WTC11 (cell line): ENCODE measurements at regions of chr9 and their contacts with region 1.

Region 1: GRCh38 chr9:34500623-34501267 is 22.0 kb downstream of the ENHO start:
- DNase-seq: peak; percentile 83
- ATAC-seq: peak; percentile 80
- H3K4me3 Mint-ChIP-seq: no peak overlapping the region
- H3K27ac Mint-ChIP-seq: no peak overlapping the region
- H3K4me1 Mint-ChIP-seq: peaks cover 12% of the 10 kb centered on the region
- H3K27me3 Mint-ChIP-seq: peaks cover 4% of the 10 kb centered on the region; the same call in 1 of the 2 replicates
- CTCF ChIP-seq: peak; percentile 98

Region 2: GRCh38 chr9:34437006-34437925 is 63.5 kb before region 1 on chr9:
- CTCF ChIA-PET with region 1: interaction called, 17 read pairs
- POLR2A ChIA-PET with region 1: no interaction called
- DNase-seq: peak; percentile 71
- ATAC-seq: peak; percentile 97
- H3K4me3 Mint-ChIP-seq: no peak overlapping the region
- H3K27ac Mint-ChIP-seq: no peak overlapping the region
- H3K4me1 Mint-ChIP-seq: peaks cover 13% of the 10 kb centered on the region
- H3K27me3 Mint-ChIP-seq: no peaks in the 10 kb centered on the region
- CTCF ChIP-seq: peak; percentile 74

Region 3: DNA sequence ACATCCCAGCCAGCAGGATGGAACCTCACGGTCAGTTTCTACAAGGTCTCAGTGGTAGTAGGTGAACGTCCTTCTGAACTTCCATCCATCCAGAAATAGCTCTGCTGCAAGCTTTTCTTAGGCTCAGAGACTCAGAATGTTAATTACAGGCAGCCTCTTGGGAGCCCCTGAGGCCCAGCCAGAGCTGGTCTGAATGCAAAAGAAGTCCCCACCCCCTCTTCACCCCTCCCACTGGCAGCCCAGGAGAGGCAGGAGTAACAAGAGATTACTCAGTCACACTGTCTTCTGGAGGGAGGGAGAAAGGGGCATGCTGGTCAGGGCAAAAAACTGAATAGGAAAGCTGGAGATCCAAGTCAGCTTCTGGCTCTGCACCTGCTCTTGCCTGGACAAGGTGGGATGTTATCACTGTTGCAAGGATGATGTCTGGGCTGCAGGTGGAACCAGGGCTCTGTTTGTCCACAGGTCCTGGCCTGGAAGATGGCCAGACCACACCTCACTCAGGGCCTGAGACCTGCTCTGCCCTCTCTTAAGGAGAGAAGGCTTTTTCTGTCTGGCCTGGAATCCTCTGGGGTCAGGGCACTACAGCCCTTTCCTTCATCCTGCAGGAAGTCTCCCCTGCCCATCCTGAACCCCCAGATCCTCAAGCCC is 12.9 kb after region 1 on chr9:
- CTCF ChIA-PET with region 1: interaction called, 18 read pairs
- POLR2A ChIA-PET with region 1: interaction called, 3 read pairs
- DNase-seq: peak; percentile 72
- ATAC-seq: peak; percentile 78
- H3K4me3 Mint-ChIP-seq: peak overlapping the region; percentile 43
- H3K27ac Mint-ChIP-seq: peak overlapping the region; percentile 96
- H3K4me1 Mint-ChIP-seq: peaks cover 59% of the 10 kb centered on the region
- H3K27me3 Mint-ChIP-seq: no peaks in the 10 kb centered on the region
- CTCF ChIP-seq: no peak

Region 4: DNA sequence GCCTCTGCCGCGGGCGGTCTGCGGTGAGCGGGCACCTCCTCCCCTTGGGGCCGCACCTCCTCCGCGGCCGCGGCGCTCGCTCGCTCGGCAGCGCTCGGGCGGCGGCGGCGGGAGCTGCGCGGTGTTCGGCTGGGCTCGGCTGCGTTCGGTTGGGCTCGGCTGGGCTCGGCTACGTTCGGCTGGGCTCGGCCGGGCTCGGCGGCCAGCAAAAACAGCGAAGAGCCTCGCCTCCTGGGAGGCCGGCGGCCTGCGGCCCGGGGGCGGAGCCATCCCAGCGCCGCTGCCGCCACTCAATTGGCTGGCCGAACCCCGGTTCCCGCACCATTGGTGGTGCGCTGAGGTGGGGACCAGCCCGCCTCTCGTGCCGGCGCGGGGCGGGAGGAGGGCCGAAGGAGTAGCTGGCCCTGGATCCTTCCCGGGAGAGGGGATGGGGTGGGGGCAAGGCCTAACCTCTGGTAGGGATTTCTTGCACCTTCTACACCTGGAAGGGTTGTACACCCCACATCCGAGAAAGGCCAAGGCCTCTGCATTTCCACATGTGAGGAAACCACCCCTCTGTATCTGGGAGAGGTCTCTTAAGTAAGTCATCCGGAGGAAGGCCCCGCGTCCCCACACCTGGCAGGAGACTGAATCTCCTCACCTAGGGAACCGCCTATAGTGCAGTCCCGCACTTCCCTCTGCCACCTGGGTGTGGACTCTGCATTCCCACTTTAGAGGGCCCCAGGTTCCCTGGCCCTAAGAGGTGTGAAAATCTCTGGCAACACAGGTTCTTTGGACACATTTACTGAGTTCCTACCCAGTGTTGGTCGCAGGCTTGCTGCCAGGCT is 22.4 kb after region 1 on chr9 and contains the start of gene ENHO:
- CTCF ChIA-PET with region 1: interaction called, 16 read pairs
- POLR2A ChIA-PET with region 1: interaction called, 3 read pairs
- DNase-seq: peak; percentile 94
- ATAC-seq: peak; percentile 97
- H3K4me3 Mint-ChIP-seq: peak within 1 kb of the TSS; percentile 86
- H3K27ac Mint-ChIP-seq: no peak within 1 kb of the TSS; the same call in 1 of the 2 replicates
- H3K4me1 Mint-ChIP-seq: peaks cover 20% of the 10 kb centered on the region
- H3K27me3 Mint-ChIP-seq: peaks cover 44% of the 10 kb centered on the region
- CTCF ChIP-seq: no peak
- total RNA-seq, gene ENHO: 26.9 to 28.3 TPM (median 27.9 TPM) in 3 replicates